Endothelial cell of umbilical vein (primary cell): ENCODE measurements at regions of chr3 and their contacts with region 1.

Region 1: DNA sequence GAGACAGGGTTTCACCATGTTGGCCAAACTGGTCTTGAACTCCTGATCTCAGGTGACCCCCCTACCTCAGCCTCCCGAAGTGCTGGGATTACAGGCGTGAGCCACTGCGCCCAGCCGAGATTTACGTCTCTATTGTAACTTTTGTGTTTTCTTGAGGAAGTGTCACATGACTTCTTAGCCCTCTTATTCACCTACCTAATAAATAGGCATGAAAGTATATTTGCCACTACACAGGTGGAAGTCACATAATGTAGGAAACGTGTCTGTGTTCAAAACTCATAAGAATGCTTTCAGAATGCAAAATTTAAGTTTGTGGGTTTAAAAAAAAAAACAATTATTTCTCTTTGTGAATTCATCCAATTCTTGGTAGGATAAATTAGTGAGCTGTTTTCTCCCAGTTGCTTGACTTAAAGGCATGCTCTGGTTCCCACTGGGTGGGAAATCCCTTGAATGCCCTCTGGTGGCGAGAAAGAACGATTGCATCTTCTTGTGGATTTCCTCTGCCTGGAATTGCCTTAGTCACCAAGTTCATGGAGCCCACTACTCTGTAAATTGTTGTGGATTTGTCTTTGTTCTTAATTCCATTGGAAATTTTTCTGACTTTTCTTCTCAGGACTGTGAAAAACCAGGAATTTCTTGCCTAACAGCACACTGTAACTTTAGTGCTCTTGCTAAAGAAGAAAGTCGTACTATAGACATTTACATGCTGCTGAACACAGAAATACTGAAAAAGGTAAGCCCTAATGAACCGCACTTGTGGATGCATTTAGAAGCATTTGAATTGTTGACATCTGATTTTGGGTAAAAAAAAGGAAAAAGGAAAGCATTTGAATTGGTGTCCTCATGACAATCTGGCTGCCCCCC is 82.2 kb upstream of the CTDSPL start:
- DNase-seq: peak; percentile 76
- H3K4me3 ChIP-seq: no peak overlapping the region
- H3K27ac ChIP-seq: no peak overlapping the region
- H3K4me1 ChIP-seq: no peaks in the 10 kb centered on the region
- H3K27me3 ChIP-seq: no peaks in the 10 kb centered on the region
- CTCF ChIP-seq: peak; percentile 67 to 80
- POLR2A ChIP-seq: no peak

Region 2: DNA sequence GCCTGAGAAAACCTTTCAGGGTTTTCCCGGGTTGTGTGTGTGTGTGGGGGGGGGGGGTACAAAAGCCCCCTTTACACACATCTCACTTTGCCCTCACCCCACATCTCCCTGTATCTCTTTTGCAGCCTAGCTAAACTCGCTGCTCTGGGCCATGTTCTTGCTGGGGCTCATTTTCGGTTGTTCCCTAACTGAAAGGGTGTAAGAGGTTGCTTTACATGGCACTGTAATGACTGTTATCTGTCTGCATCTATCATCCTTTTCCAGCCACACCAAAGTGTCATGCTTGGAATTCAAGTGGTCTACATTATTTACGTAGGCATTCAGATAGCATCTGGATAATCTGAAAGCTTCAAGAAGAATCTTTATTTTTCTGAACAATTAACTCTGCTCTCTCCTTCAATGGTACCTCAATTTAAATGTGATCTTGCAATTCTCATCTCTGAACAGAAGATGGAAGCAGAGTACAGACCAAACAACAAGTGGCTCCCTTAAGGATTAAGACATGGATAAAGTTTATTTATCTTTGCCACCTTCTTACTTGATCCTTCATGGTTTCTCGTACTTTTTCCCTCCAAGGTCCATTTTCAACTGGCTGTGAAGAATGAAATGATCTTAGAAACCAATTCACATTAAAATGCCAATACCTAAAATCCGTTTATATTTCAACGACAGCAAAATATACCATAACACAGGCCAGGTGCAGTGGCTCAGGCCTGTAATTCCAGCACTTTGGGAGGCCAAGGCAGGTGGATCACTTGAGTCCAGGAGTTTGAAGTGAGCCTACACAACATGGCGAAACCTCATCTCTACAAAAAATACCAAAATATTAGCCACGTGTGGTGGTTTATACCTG is 1050.1 kb before region 1 on chr3:
- CTCF ChIA-PET with region 1: interaction called, 5 read pairs
- POLR2A ChIA-PET with region 1: no interaction called
- dilution Hi-C with region 1: no loop called
- intact Hi-C with region 1: loop called (anchors 1 kb)
- DNase-seq: peak; percentile 50
- H3K4me3 ChIP-seq: no peak overlapping the region
- H3K27ac ChIP-seq: no peak overlapping the region
- H3K4me1 ChIP-seq: no peaks in the 10 kb centered on the region
- H3K27me3 ChIP-seq: no peaks in the 10 kb centered on the region
- CTCF ChIP-seq: peak; percentile 36 to 43
- POLR2A ChIP-seq: no peak

Region 3: GRCh38 chr3:37308247-37308646 is 471.3 kb before region 1 on chr3:
- CTCF ChIA-PET with region 1: interaction called, 7 read pairs
- POLR2A ChIA-PET with region 1: no interaction called
- dilution Hi-C with region 1: no loop called
- intact Hi-C with region 1: loop called (anchors 1 kb)
- DNase-seq: peak; percentile 31
- H3K4me3 ChIP-seq: no peak overlapping the region
- H3K27ac ChIP-seq: no peak overlapping the region
- H3K4me1 ChIP-seq: no peaks in the 10 kb centered on the region
- H3K27me3 ChIP-seq: no peaks in the 10 kb centered on the region
- CTCF ChIP-seq: peak; percentile 11 to 18
- POLR2A ChIP-seq: no peak

Region 4: DNA sequence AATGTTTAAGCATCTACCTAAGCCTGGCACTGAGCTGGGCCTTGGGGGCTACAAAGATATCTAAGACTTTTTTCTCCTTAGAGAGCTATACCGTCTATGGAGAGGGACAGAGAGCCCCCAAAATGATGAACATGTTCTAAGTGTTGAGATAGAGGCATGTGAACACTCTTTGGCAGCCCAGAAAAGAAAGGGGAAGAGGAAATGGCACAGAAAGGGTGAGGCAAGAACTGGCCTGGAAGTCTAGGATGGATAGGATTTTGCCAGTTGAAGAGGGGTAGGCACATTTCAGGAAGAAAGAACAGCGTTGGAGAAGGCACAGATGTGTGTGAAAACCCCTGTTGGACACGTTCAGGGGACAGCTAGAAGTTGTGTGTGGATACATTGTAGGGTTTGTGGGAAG is 329.0 kb before region 1 on chr3:
- CTCF ChIA-PET with region 1: interaction called, 17 read pairs
- POLR2A ChIA-PET with region 1: no interaction called
- dilution Hi-C with region 1: no loop called
- intact Hi-C with region 1: no loop called
- DNase-seq: no peak
- H3K4me3 ChIP-seq: no peak overlapping the region
- H3K27ac ChIP-seq: no peak overlapping the region
- H3K4me1 ChIP-seq: peaks cover 3% of the 10 kb centered on the region
- H3K27me3 ChIP-seq: peaks cover 43 to 51% of the 10 kb centered on the region in 2 experiments
- CTCF ChIP-seq: no peak
- POLR2A ChIP-seq: no peak

Region 5: GRCh38 chr3:37458162-37459120 is 321.1 kb before region 1 on chr3:
- CTCF ChIA-PET with region 1: interaction called, 11 read pairs
- POLR2A ChIA-PET with region 1: no interaction called
- dilution Hi-C with region 1: no loop called
- intact Hi-C with region 1: no loop called
- DNase-seq: no peak
- H3K4me3 ChIP-seq: no peak overlapping the region
- H3K27ac ChIP-seq: no peak overlapping the region
- H3K4me1 ChIP-seq: no peaks in the 10 kb centered on the region
- H3K27me3 ChIP-seq: peaks cover 28 to 31% of the 10 kb centered on the region in 2 experiments
- CTCF ChIP-seq: no peak
- POLR2A ChIP-seq: no peak